ENCODE measurements at regions of chr22 and their contacts with region 1.

Region 1: DNA sequence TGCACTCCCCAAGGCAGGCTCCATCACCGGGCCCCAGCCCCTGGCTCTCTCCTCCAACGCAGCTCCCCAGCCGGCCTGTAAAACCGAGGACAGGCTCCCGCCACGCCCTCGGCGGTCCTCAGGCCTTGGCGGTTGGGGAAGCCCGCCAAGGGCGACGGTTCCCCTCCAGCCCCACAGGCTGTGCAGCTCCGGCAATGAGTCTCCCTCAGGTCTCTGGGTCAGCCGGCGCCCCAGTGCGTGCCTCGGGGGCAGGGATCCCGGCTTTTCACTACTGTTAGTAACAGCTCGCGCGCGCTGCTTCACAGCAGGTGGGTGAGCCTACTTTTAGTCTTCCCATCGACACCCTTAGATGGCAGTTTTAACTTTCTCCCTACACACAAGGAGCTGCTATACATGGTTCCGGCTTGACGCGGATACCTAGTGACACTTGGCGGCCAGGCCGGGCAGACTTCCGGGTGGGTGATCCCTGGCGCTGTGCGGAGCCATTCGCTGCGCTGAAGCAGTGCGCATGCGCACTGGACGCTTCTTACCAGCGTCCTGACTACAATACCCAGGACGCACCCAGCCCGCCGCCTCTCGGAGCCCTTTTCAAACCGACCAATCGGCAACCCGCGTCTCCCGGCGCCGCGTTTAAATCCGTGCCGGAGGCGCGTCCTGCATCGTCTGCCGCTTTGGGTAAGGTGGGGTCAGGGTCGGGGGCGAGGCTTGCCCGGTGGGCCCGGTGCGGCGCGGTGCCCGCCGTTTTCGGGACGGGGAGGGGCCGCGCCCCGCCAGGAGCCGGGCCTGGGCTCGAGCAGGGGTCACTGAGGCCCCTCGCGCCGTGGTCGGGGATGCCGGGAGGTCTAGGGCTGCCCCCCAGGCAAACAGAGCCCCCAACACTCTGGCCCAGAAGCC is at the start of gene GTSE1:
- DNase-seq: peak; percentile 99
- H3K4me3 ChIP-seq: peak within 1 kb of the TSS; percentile 79
- H3K27ac ChIP-seq: peak within 1 kb of the TSS; percentile 86
- H3K4me1 ChIP-seq: peaks cover 28% of the 10 kb centered on the region
- H3K27me3 ChIP-seq: no peaks in the 10 kb centered on the region
- CTCF ChIP-seq: peak; percentile 39
- total RNA-seq, gene GTSE1: 87.3 and 88.1 TPM in 2 replicates

Region 2: DNA sequence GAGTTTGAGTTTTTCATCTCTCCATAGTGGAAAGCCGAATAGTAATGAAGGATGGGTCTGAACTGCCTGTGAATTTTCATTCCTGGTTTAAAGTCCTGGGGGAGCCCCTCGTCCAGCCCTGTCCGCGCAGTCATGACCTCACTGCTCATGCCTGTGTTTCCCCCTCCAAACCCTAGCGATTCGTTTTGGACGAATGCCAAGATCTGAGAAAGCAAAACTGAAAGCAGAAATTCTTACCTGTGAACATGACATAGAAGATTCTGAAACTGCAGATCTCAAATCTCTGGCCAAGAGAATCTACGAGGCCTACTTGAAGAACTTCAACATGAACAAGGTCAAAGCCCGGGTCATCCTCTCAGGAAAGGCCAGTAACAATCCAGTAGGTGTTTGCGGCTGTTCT is 76.9 kb before region 1 on chr22:
- CTCF ChIA-PET with region 1: no interaction called
- POLR2A ChIA-PET with region 1: no interaction called
- intact Hi-C with region 1: no loop called
- DNase-seq: no peak
- H3K4me3 ChIP-seq: no peak overlapping the region
- H3K27ac ChIP-seq: no peak overlapping the region
- H3K4me1 ChIP-seq: no peaks in the 10 kb centered on the region
- H3K27me3 ChIP-seq: no peaks in the 10 kb centered on the region
- CTCF ChIP-seq: no peak

Region 3: DNA sequence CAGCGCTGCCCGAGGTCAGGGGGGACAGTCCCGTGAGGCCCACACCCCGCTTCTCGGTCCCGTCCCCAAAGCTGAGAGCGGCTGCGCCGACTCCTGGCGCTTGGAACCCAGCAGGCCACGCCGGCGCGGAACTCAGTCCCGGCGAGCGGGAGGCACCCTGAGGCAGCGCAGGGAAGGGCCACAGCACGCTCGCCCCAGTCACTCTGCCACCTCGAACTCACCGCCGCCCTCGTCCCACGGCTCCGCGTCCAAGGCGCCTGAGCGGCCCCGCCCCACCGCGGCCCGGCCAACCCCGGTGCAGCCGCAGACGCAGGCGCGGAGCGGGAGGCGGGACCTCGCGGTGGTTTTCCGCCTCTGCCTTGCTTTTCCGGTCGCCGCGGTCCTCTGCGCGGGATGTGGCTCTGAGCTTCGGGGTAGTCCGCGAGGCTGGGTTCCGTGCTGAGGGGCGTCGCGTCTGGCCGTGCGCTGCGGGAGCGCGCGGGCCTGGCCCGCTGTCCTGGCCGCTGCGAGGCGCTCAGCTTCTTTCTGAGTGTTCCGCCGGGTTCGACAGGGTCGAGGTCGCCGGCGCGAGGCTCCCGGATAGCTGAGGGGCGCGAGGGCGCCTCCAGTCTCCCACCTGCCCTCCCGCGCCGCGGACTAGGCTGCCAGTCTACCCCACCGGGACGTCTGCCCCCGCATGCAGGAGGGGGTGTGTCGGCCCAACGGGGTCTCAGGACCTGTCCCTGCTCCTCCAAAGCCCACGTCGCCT is 46.3 kb before region 1 on chr22 and contains the start of gene CDPF1:
- CTCF ChIA-PET with region 1: no interaction called
- POLR2A ChIA-PET with region 1: no interaction called
- intact Hi-C with region 1: loop called (anchors 2 kb)
- DNase-seq: peak; percentile 92
- H3K4me3 ChIP-seq: peak within 1 kb of the TSS; percentile 93
- H3K27ac ChIP-seq: peak within 1 kb of the TSS; percentile 91
- H3K4me1 ChIP-seq: peaks cover 17% of the 10 kb centered on the region
- H3K27me3 ChIP-seq: no peaks in the 10 kb centered on the region
- CTCF ChIP-seq: no peak
- total RNA-seq, gene CDPF1: 7.0 and 12.4 TPM in 2 replicates

Region 4: GRCh38 chr22:46275455-46276122 is 20.9 kb before region 1 on chr22:
- CTCF ChIA-PET with region 1: no interaction called
- POLR2A ChIA-PET with region 1: no interaction called
- intact Hi-C with region 1: no loop called
- DNase-seq: no peak
- H3K4me3 ChIP-seq: no peak overlapping the region
- H3K27ac ChIP-seq: no peak overlapping the region
- H3K4me1 ChIP-seq: no peaks in the 10 kb centered on the region
- H3K27me3 ChIP-seq: no peaks in the 10 kb centered on the region
- CTCF ChIP-seq: no peak